Caco-2 (cell line): ENCODE measurements at regions of chr2 and their contacts with region 1.

Region 1: GRCh38 chr2:138493334-138493733 is 8.2 kb upstream of the SPOPL start:
- DNase-seq: peak in 1 of 2 experiments; percentile 74
- H3K4me3 ChIP-seq: no peak overlapping the region
- H3K4me3 Mint-ChIP-seq: no peak overlapping the region
- H3K27ac Mint-ChIP-seq: peak overlapping the region; percentile 76
- H3K4me1 ChIP-seq: peaks cover 70% of the 10 kb centered on the region
- H3K4me1 Mint-ChIP-seq: peaks cover 39% of the 10 kb centered on the region
- H3K27me3 ChIP-seq: no peaks in the 10 kb centered on the region
- H3K27me3 Mint-ChIP-seq: no peaks in the 10 kb centered on the region
- CTCF ChIP-seq: no peak

Region 2: DNA sequence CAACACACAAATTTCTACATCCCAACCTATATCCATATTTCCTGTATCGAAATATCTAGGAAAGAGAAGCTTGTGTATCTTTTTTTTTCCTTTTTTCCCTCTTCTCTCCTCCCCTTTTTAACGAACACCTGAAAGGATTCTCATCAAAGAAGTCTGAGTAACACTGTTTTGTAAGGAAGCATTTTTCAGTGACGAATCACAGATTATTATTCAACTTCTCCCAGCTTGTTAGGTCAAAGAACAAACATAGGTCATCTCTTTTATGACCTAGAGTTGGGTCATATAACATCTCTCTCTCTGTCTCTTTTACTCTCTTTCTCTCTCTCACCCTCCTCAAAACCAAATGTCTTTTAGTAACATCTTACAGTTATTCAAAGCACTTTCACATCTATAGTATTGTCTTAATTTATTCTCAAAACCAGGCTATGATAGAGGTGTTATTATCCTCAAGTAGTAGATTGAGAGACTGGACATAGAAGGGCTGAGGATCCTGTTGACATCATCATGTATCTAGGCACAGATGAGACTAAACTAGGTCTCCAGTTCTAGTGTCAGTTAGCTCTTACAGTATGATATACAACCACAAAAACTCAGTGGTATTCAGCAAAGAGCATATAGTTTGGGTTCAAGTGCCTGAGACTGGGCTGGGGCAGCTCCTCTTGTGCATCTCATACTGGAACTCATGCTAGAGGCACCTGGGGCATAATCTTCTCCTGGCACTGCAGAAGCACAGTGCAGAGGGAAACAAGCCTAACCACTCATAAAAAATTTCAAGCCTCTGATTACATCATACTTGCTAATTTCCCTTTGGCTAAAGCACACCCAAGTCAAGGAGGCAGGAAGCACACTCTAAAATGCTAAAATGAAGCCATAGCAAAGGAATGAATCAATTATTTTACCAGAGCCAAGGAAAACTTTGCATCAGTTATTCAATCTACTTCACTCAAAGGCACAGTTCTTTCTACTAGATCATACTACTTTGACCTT is 71.7 kb before region 1 on chr2:
- CTCF ChIA-PET with region 1: no interaction called
- POLR2A ChIA-PET with region 1: no interaction called
- intact Hi-C with region 1: loop called (anchors 5 kb)
- DNase-seq: peak in 1 of 2 experiments; percentile 44
- H3K4me3 ChIP-seq: no peak overlapping the region
- H3K4me3 Mint-ChIP-seq: peak overlapping the region; percentile 51
- H3K27ac Mint-ChIP-seq: peak overlapping the region; percentile 62
- H3K4me1 ChIP-seq: peaks cover 38% of the 10 kb centered on the region
- H3K4me1 Mint-ChIP-seq: peaks cover 15% of the 10 kb centered on the region
- H3K27me3 ChIP-seq: no peaks in the 10 kb centered on the region
- H3K27me3 Mint-ChIP-seq: no peaks in the 10 kb centered on the region
- CTCF ChIP-seq: no peak

Region 3: GRCh38 chr2:138475277-138475776 is 18.0 kb before region 1 on chr2:
- CTCF ChIA-PET with region 1: no interaction called
- POLR2A ChIA-PET with region 1: interaction called, 3 read pairs
- intact Hi-C with region 1: loop called (anchors 2 kb)
- DNase-seq: no peak
- H3K4me3 ChIP-seq: no peak overlapping the region
- H3K4me3 Mint-ChIP-seq: no peak overlapping the region
- H3K27ac Mint-ChIP-seq: peak overlapping the region; percentile 17
- H3K4me1 ChIP-seq: peaks cover 6% of the 10 kb centered on the region; the same call in 1 of the 2 replicates
- H3K4me1 Mint-ChIP-seq: peaks cover 23% of the 10 kb centered on the region
- H3K27me3 ChIP-seq: no peaks in the 10 kb centered on the region
- H3K27me3 Mint-ChIP-seq: no peaks in the 10 kb centered on the region
- CTCF ChIP-seq: no peak

Region 4: DNA sequence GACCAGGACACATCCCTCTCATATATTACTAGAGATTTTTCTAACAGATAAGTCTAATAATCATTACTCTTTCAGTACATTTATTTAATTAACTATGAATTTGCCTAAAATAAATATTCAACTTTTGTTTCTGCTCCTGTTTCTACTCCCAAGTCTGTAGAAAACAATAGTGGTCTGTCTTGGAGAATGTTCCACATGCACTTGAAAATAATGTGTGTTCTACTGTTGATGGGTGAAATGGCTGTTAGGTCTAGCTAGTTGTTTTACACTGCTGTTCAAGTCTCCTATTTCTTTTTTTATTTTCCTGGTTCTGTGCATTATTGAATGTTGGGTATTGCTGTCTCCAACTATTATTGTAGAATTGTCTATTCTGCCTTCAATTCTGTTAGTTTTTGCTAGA is 55.5 kb after region 1 on chr2:
- CTCF ChIA-PET with region 1: no interaction called
- POLR2A ChIA-PET with region 1: no interaction called
- intact Hi-C with region 1: no loop called
- DNase-seq: no peak
- H3K4me3 ChIP-seq: no peak overlapping the region
- H3K4me3 Mint-ChIP-seq: no peak overlapping the region
- H3K27ac Mint-ChIP-seq: no peak overlapping the region
- H3K4me1 ChIP-seq: no peaks in the 10 kb centered on the region
- H3K4me1 Mint-ChIP-seq: peaks cover 13% of the 10 kb centered on the region
- H3K27me3 ChIP-seq: no peaks in the 10 kb centered on the region
- H3K27me3 Mint-ChIP-seq: no peaks in the 10 kb centered on the region
- CTCF ChIP-seq: no peak

Region 5: GRCh38 chr2:138727956-138728355 is 234.6 kb after region 1 on chr2:
- CTCF ChIA-PET with region 1: no interaction called
- POLR2A ChIA-PET with region 1: no interaction called
- intact Hi-C with region 1: loop called (anchors 5 kb)
- DNase-seq: no peak
- H3K4me3 ChIP-seq: no peak overlapping the region
- H3K4me3 Mint-ChIP-seq: no peak overlapping the region
- H3K27ac Mint-ChIP-seq: no peak overlapping the region
- H3K4me1 ChIP-seq: peaks cover 28% of the 10 kb centered on the region
- H3K4me1 Mint-ChIP-seq: peaks cover 7% of the 10 kb centered on the region
- H3K27me3 ChIP-seq: no peaks in the 10 kb centered on the region
- H3K27me3 Mint-ChIP-seq: no peaks in the 10 kb centered on the region
- CTCF ChIP-seq: no peak

Region 6: DNA sequence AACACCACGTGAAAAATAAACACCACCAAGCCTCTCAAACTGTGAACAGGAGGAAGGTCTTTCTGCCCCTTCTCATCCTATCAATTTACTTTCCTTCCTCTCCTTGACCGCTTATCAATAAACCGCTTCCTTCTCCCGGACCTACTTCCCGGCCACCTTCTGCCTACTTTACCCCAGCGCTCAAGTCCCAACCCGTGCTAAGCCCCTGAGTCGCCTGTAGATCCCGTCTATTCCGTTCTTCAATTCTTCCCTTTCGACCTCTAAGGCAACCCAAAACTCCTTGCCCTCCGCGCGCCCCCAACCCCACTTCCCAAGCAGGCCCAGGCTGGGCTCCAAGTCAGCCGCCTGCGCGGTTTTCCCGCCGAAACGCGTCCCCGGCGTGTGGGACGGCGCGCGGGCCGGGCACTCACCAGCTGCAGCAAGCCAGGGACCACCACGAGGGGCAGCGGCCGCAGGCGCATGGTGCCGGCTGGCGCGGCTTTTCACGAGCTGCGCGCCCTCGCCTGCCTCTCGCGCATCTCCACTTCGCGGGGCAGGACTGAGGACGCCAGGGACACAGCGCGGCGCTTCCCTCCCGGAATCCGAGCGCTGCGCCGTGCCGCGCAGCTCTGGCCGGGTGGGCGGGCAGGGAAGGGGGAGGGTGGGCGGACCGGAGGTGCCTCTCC is 286.6 kb after region 1 on chr2 and contains the start of gene NXPH2:
- CTCF ChIA-PET with region 1: no interaction called
- POLR2A ChIA-PET with region 1: no interaction called
- intact Hi-C with region 1: loop called (anchors 2 kb)
- DNase-seq: no peak
- H3K4me3 ChIP-seq: no peak within 1 kb of the TSS
- H3K4me3 Mint-ChIP-seq: no peak within 1 kb of the TSS
- H3K27ac Mint-ChIP-seq: peak within 1 kb of the TSS; percentile 88
- H3K4me1 ChIP-seq: peaks cover 15% of the 10 kb centered on the region
- H3K4me1 Mint-ChIP-seq: peaks cover 15% of the 10 kb centered on the region
- H3K27me3 ChIP-seq: no peaks in the 10 kb centered on the region
- H3K27me3 Mint-ChIP-seq: no peaks in the 10 kb centered on the region
- CTCF ChIP-seq: no peak
- total RNA-seq, gene NXPH2: not detected in 2 replicates